MCF 10A (cell line): ENCODE measurements at regions of chr2 and their contacts with region 1.

Region 1: GRCh38 chr2:75403991-75404428 is 156.7 kb downstream of the EVA1A start:
- DNase-seq: peak; percentile 58
- H3K4me3 Mint-ChIP-seq: no peak overlapping the region
- H3K27ac Mint-ChIP-seq: no peak overlapping the region
- H3K4me1 Mint-ChIP-seq: no peaks in the 10 kb centered on the region
- H3K27me3 Mint-ChIP-seq: peaks cover 100% of the 10 kb centered on the region
- CTCF ChIP-seq: peak; percentile 86

Region 2: GRCh38 chr2:74919827-74920226 is 484.2 kb before region 1 on chr2:
- CTCF ChIA-PET with region 1: no interaction called
- POLR2A ChIA-PET with region 1: no interaction called
- intact Hi-C with region 1: loop called (anchors 10 kb)
- DNase-seq: peak; percentile 22
- H3K4me3 Mint-ChIP-seq: no peak overlapping the region
- H3K27ac Mint-ChIP-seq: no peak overlapping the region
- H3K4me1 Mint-ChIP-seq: peaks cover 20% of the 10 kb centered on the region
- H3K27me3 Mint-ChIP-seq: no peaks in the 10 kb centered on the region
- CTCF ChIP-seq: peak; percentile 43

Region 3: DNA sequence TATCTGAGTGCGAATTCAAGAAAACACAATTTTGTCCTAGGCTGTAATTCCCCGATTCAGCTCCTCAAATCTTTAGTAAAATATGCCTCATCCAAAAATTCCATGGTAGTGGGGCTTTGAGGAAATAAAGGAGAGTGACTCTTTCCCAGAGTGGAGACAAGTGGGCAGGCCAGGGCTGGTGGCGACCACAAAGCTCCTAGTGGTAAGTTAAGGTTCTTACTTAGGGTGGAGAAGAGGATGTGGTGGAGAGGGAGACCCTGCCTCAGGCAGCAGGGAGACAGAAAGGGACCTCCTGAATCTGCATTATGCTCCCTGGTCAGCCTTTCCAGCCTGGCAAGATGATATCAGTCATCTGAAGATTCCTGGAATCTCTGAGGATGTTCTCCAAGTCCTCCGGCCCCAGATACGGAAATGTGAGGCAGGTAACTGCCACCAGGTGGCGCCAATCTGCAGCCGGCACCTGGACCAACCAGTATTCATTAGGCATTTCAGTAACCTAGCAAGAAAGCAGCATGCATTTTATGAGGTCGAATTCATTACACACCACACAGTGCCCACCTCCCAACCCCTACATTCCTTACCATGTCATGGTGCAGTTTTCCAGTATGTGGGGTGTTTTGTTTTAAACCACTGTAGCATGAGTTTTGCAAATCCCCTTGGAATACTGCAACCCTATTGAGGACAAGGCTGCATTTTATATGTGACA is 339.2 kb before region 1 on chr2:
- CTCF ChIA-PET with region 1: interaction called, 66 read pairs
- POLR2A ChIA-PET with region 1: no interaction called
- intact Hi-C with region 1: loop called (anchors 1 kb)
- DNase-seq: peak; percentile 66
- H3K4me3 Mint-ChIP-seq: no peak overlapping the region
- H3K27ac Mint-ChIP-seq: no peak overlapping the region
- H3K4me1 Mint-ChIP-seq: no peaks in the 10 kb centered on the region
- H3K27me3 Mint-ChIP-seq: no peaks in the 10 kb centered on the region
- CTCF ChIP-seq: peak; percentile 85

Region 4: GRCh38 chr2:75199428-75200011 is 204.5 kb before region 1 on chr2 and contains the start of gene TACR1:
- CTCF ChIA-PET with region 1: interaction called, 3 read pairs
- POLR2A ChIA-PET with region 1: no interaction called
- intact Hi-C with region 1: loop called (anchors 1 kb)
- DNase-seq: peak; percentile 26
- H3K4me3 Mint-ChIP-seq: peak within 1 kb of the TSS; percentile 52
- H3K27ac Mint-ChIP-seq: no peak within 1 kb of the TSS
- H3K4me1 Mint-ChIP-seq: no peaks in the 10 kb centered on the region
- H3K27me3 Mint-ChIP-seq: peaks cover 49% of the 10 kb centered on the region
- CTCF ChIP-seq: no peak
- total RNA-seq, gene TACR1: not detected in 2 replicates

Region 5: GRCh38 chr2:75500633-75501032 is 96.6 kb after region 1 on chr2:
- CTCF ChIA-PET with region 1: no interaction called
- POLR2A ChIA-PET with region 1: no interaction called
- intact Hi-C with region 1: no loop called
- DNase-seq: peak; percentile 24
- H3K4me3 Mint-ChIP-seq: no peak overlapping the region
- H3K27ac Mint-ChIP-seq: no peak overlapping the region
- H3K4me1 Mint-ChIP-seq: peaks cover 14% of the 10 kb centered on the region
- H3K27me3 Mint-ChIP-seq: no peaks in the 10 kb centered on the region
- CTCF ChIP-seq: no peak

Region 6: GRCh38 chr2:75516378-75517360 is 112.7 kb after region 1 on chr2:
- CTCF ChIA-PET with region 1: no interaction called
- POLR2A ChIA-PET with region 1: no interaction called
- intact Hi-C with region 1: no loop called
- DNase-seq: no peak
- H3K4me3 Mint-ChIP-seq: no peak overlapping the region
- H3K27ac Mint-ChIP-seq: peak overlapping the region; percentile 37
- H3K4me1 Mint-ChIP-seq: peaks cover 8% of the 10 kb centered on the region
- H3K27me3 Mint-ChIP-seq: no peaks in the 10 kb centered on the region
- CTCF ChIP-seq: no peak